ENCODE measurements at regions of chr10 and their contacts with region 1.

Region 1: GRCh38 chr10:22325272-22326144 is 4.6 kb downstream of the BMI1 start:
- DNase-seq: no peak
- H3K4me3 ChIP-seq: peak overlapping the region; percentile 50 to 73 (median 61)
- H3K27ac ChIP-seq: peak overlapping the region; percentile 55 to 83 (median 78)
- H3K4me1 ChIP-seq: peaks cover 4 to 45% (median 16%) of the 10 kb centered on the region in 3 donors
- H3K27me3 ChIP-seq: peaks cover 0 to 31% (median 3%) of the 10 kb centered on the region in 4 donors
- CTCF ChIP-seq: peak in 1 of 6 experiments; percentile 10
- POLR2A ChIP-seq: no peak

Region 2: GRCh38 chr10:22003079-22003913 is 322.2 kb before region 1 on chr10 and contains the start of gene DNAJC1:
- intact Hi-C with region 1: loop called (anchors 10 kb)
- DNase-seq: peak; percentile 82
- H3K4me3 ChIP-seq: peak within 1 kb of the TSS; percentile 77 to 97 (median 84)
- H3K27ac ChIP-seq: peak within 1 kb of the TSS; percentile 92 to 99 (median 96)
- H3K4me1 ChIP-seq: peaks cover 9 to 31% (median 13%) of the 10 kb centered on the region in 3 donors
- H3K27me3 ChIP-seq: no peaks in the 10 kb centered on the region
- CTCF ChIP-seq: peak in 3 of 6 experiments; percentile 4 to 27 (median 22)
- POLR2A ChIP-seq: peak in 3 of 4 donors; percentile 81 to 96 (median 88)
- total RNA-seq, gene DNAJC1: 36.1 to 84.8 (median 43.6) TPM

Region 3: DNA sequence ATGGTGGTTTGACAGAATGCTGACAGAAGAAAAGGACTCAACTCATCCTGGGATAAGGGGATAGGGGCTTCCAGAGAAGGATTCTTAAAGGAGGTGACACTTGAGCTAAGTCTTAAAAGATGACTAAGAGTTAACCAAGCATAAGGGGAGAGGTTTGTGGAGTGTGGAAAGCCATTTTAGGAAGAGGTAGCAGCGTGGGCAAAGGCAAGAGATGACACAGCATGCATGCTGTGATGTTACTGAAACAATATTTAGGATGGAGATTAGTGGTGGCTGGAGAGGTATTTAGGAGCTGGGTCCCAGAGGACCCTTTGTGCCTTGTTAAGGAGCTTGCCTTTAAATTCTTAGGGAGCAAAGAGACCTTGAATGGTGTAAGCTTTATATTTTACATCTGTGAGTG is 84.9 kb after region 1 on chr10:
- intact Hi-C with region 1: no loop called
- DNase-seq: no peak
- H3K4me3 ChIP-seq: no peak overlapping the region
- H3K27ac ChIP-seq: no peak overlapping the region
- H3K4me1 ChIP-seq: no peaks in the 10 kb centered on the region
- H3K27me3 ChIP-seq: peaks cover 0 to 10% (median 0%) of the 10 kb centered on the region in 4 donors
- CTCF ChIP-seq: no peak
- POLR2A ChIP-seq: no peak

Region 4: GRCh38 chr10:22436884-22437619 is 111.5 kb after region 1 on chr10:
- intact Hi-C with region 1: loop called (anchors 10 kb)
- DNase-seq: peak; percentile 63
- H3K4me3 ChIP-seq: peak overlapping the region; percentile 54 to 79 (median 76)
- H3K27ac ChIP-seq: peak overlapping the region; percentile 87 to 97 (median 95)
- H3K4me1 ChIP-seq: peaks cover 13 to 23% (median 13%) of the 10 kb centered on the region in 3 donors
- H3K27me3 ChIP-seq: no peaks in the 10 kb centered on the region
- CTCF ChIP-seq: peak in 1 of 6 experiments; percentile 24
- POLR2A ChIP-seq: peak in 3 of 4 donors; percentile 64 to 96 (median 93)

Region 5: DNA sequence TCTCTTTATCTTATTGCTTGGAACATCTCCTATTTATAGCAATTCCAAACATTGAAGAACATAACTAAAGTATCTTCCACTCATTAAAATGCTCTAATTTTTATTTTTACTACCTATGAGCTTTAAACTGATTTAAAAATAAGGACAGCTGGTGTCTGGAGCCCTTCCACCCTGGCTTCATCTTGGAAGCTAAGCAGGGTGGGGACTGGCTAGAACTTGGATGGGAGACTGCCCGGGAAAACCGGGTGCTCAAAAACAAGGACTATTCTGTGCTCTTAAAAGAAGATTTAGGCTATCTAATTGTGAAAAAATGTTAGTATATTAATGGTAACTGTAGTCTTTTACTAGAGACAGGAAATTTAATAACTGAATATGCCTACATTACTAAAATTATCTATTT is 671.6 kb after region 1 on chr10:
- intact Hi-C with region 1: no loop called
- DNase-seq: no peak
- H3K4me3 ChIP-seq: no peak overlapping the region
- H3K27ac ChIP-seq: no peak overlapping the region
- H3K4me1 ChIP-seq: no peaks in the 10 kb centered on the region
- H3K27me3 ChIP-seq: peaks cover 0 to 27% (median 2%) of the 10 kb centered on the region in 4 donors
- CTCF ChIP-seq: no peak
- POLR2A ChIP-seq: no peak

Measured in esophagus squamous epithelium (tissue), 5 donors.